ENCODE measurements at regions of chr7 and their contacts with region 1.

Region 1: DNA sequence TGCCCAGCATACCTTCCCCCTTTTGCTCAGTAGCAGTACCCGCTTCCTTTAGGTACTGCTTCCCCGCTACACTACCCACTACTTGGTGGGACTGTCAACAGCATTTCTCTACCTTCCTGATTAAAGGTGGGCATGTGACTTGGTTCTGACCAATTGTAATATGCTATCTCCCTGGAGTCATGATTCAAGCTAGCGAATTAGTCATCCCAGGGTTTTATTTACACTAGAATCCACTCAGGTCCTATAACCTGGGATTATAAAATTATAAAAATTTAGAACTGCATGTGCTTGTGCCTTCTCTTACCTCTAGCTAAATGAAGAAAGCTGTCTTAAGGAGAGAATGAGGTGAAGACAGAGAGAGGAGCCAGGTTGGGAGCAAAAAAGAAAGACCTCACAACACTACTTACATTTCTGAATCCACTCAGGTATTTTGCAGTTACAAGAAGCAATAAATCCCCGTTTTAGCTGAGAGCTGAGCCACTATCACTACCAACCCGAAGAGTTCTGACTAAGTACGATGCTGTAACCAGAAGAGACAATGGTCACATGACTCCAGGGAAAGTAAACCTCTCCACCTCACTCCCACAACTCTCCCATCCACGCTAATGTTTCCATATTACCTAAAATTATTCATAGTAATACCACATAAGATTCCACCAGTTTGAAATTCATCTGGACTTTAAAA is 9.7 kb downstream of the GBX1 start:
- DNase-seq: peak; percentile 3
- H3K4me3 Mint-ChIP-seq: no peak overlapping the region
- H3K27ac Mint-ChIP-seq: no peak overlapping the region
- H3K4me1 Mint-ChIP-seq: no peaks in the 10 kb centered on the region
- H3K27me3 Mint-ChIP-seq: peaks cover 35% of the 10 kb centered on the region

Region 2: GRCh38 chr7:150799741-150800580 is 357.8 kb before region 1 on chr7 and contains the start of gene TMEM176B:
- CTCF ChIA-PET with region 1: no interaction called
- DNase-seq: no peak
- H3K4me3 Mint-ChIP-seq: peak within 1 kb of the TSS; percentile 43
- H3K27ac Mint-ChIP-seq: no peak within 1 kb of the TSS
- H3K4me1 Mint-ChIP-seq: peaks cover 11% of the 10 kb centered on the region
- H3K27me3 Mint-ChIP-seq: peaks cover 67% of the 10 kb centered on the region

Region 3: DNA sequence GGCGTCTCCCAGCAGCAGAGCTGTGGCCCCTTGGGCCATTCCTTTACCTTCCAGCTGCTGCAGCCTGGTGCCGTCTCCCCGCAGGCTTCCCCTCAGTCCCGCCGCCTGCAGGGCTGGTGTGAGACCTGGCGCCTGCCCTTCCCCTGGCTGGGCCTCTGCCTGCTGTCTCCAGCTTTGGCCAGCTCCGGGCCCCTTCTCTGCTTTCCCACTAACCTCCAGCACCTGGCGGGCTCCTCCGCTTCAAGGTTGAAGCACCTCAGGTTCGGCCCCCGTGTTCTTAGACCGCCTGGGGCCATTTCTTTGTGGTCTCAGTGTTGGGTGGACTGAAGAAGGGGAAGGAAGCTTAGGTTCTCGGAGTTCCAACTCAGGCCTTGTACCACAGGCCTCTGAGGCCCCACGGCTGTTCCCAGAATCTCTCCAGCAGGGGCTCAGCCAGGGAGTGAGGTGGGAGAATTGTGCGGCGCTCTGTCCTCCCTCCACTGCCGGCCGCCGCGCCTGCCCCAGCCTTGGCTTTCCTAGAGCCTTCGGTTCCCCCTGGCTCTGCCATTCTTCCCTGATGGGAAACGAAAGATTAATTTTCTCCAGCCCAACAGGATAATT is 20.6 kb before region 1 on chr7:
- CTCF ChIA-PET with region 1: no interaction called
- DNase-seq: peak; percentile 19
- H3K4me3 Mint-ChIP-seq: no peak overlapping the region
- H3K27ac Mint-ChIP-seq: no peak overlapping the region
- H3K4me1 Mint-ChIP-seq: no peaks in the 10 kb centered on the region
- H3K27me3 Mint-ChIP-seq: no peaks in the 10 kb centered on the region

Region 4: DNA sequence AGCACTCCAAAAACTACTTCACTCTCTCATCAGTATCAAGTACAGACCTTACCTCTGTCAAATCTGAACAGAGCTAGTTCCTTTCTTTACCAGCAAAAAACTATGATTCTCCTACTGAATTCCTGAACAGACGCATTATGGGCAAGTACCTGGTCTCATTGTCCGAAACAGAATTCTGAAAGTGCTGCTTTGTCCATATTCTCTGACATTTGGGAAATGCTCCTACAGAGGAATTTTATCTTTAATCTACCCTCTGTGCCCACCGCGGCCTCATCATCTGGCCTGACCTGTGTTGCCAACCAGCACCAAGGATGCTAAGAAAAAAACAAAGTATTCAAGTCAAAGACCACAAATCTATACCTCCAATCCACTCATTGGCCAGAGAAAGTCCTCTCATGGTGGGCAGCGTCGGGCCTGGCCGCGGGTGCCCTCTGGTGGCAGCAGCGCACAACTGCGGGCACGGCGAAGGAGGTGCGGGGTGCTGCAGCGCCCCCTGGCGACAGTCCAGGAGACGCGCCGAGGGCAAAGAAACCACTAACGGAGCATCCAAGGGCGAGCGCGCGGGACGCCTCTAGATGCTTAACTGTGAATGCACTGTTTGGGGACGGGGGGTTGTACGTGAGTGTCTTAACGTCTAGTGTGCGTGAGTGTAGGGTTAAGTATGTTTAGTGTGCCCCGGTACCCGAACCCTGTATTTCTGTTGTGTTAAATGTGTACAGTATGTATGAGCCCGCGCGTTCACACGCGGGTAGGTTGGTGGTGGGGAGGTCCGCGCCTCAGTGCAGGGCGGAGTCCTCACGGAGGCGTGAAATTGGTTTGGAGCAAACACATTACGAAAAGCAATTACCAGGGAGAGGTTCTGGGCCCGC is 14.7 kb after region 1 on chr7:
- CTCF ChIA-PET with region 1: interaction called, 15 read pairs
- DNase-seq: peak; percentile 79
- H3K4me3 Mint-ChIP-seq: no peak overlapping the region
- H3K27ac Mint-ChIP-seq: peak overlapping the region; percentile 33
- H3K4me1 Mint-ChIP-seq: peaks cover 10% of the 10 kb centered on the region
- H3K27me3 Mint-ChIP-seq: peaks cover 90% of the 10 kb centered on the region